ENCODE measurements at regions of chr11 and their contacts with region 1.

Region 1: DNA sequence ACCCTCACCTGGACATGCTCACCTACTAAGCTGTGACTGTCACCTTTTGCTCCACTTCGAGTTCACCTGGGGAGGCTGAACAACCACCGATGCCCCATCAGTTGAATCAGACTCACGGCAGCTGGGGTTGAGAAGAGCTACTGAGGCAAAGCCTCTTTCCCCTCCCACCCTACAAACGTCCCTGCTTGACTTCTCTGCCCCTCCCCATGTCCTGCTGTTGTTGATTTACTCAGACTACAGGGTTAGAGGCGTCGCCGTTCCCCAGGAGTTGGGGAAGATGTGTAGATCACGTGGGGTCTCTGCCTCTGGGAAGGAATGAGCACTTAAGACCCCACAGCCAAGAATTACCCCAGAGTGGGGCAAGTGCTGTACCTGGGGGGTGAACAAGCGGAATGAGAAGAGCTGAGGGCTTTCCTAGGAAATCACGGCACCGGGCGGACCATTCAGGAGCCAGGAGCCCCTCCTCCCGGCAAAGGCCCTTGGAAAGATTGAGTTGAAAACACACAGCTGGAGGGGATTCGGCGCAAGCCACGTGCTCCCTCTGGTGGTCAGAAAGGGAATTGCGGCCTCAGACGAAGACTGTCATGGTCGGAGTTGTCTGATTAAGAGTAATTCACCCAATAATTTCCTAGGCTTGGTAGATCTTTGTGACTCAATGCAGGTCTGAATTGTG is 7.0 kb downstream of the FXYD2 start:
- DNase-seq: peak; percentile 81
- ATAC-seq: peak; percentile 17
- H3K4me3 Mint-ChIP-seq: peak overlapping the region; percentile 88
- H3K27ac Mint-ChIP-seq: peak overlapping the region; percentile 97
- H3K4me1 Mint-ChIP-seq: peaks cover 75% of the 10 kb centered on the region
- H3K27me3 Mint-ChIP-seq: peaks cover 3% of the 10 kb centered on the region
- CTCF ChIP-seq: peak; percentile 80

Region 2: GRCh38 chr11:117426269-117426685 is 391.2 kb before region 1 on chr11:
- CTCF ChIA-PET with region 1: interaction called, 31 read pairs
- POLR2A ChIA-PET with region 1: interaction called, 5 read pairs
- intact Hi-C with region 1: no loop called
- DNase-seq: peak; percentile 52
- ATAC-seq: peak; percentile 62
- H3K4me3 Mint-ChIP-seq: no peak overlapping the region
- H3K27ac Mint-ChIP-seq: no peak overlapping the region
- H3K4me1 Mint-ChIP-seq: peaks cover 7% of the 10 kb centered on the region
- H3K27me3 Mint-ChIP-seq: peaks cover 7% of the 10 kb centered on the region
- CTCF ChIP-seq: peak; percentile 23

Region 3: DNA sequence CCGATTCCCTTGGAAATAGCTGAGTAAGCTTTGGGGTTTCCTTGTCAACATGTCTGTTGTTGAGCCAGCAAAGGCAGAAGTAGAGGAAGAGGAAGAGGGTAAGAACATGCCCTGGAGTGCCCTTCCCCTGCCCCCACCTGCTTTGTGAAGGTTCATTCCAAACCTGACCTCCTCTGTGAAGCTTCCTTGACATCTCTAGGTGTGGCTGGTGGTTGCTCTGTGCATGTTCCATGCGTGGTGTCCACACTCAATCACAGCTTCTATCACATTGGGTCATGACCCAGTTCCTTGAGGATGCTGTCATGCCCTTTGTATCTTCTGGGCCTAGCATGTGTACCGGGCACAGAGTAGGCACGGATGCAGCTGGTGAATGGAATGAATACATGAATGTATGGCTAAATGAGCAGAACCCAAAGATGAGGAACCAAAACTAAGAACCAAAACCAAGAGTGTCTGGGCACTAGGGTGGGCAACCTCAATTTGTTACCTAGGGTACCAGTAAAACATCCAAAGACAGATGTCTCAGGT is 82.7 kb after region 1 on chr11:
- CTCF ChIA-PET with region 1: interaction called, 4 read pairs
- POLR2A ChIA-PET with region 1: interaction called, 11 read pairs
- intact Hi-C with region 1: loop called (anchors 1 kb)
- DNase-seq: peak; percentile 40
- ATAC-seq: peak; percentile 83
- H3K4me3 Mint-ChIP-seq: peak overlapping the region; percentile 9
- H3K27ac Mint-ChIP-seq: peak overlapping the region; percentile 87
- H3K4me1 Mint-ChIP-seq: peaks cover 26% of the 10 kb centered on the region
- H3K27me3 Mint-ChIP-seq: no peaks in the 10 kb centered on the region
- CTCF ChIP-seq: no peak

Region 4: DNA sequence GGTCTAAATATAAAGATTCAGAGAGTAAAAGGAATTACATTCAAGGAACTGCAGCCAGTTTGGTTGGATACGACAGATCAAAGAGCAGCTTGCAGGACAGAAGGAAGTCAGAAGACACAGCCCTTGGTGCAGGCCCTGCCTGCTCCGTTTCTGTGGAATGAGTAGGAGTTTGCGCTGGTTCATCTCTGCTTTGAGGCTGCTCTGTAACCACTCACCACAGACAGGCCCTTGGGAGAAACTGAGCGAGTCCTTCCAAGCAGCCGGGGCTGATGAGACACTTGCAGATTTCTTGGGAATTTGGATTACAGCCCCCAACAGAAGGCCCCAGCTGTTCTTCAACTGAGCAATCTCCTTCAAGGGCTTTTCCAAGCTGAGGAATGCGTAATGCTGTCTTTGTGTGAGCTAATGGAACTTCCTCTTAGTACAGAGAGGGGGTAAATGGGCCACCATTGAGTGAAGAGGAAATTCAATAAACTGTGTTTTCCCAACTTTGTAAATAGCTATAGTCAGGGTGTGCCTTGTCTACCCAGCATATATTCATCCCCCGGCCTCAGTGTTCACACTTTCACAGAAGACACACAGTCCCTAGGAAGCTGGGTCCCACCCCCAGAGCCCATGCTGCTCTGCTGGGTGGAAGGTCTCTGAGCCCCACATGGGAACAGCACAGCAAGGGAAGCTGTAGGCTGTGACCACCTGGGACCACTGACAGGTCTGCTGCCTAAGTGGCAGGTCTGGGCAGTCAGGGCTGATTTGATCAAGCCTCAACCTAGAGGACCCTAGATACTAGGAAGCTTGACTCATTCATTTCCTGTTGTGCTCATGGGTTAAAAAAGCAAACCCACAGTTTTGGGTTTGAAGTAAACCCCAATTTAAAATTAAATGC is 185.3 kb after region 1 on chr11:
- CTCF ChIA-PET with region 1: interaction called, 4 read pairs
- POLR2A ChIA-PET with region 1: interaction called, 132 read pairs
- intact Hi-C with region 1: no loop called
- DNase-seq: no peak
- ATAC-seq: peak; percentile 21
- H3K4me3 Mint-ChIP-seq: peak overlapping the region; percentile 52
- H3K27ac Mint-ChIP-seq: peak overlapping the region; percentile 98
- H3K4me1 Mint-ChIP-seq: peaks cover 93% of the 10 kb centered on the region
- H3K27me3 Mint-ChIP-seq: no peaks in the 10 kb centered on the region
- CTCF ChIP-seq: no peak

Region 5: DNA sequence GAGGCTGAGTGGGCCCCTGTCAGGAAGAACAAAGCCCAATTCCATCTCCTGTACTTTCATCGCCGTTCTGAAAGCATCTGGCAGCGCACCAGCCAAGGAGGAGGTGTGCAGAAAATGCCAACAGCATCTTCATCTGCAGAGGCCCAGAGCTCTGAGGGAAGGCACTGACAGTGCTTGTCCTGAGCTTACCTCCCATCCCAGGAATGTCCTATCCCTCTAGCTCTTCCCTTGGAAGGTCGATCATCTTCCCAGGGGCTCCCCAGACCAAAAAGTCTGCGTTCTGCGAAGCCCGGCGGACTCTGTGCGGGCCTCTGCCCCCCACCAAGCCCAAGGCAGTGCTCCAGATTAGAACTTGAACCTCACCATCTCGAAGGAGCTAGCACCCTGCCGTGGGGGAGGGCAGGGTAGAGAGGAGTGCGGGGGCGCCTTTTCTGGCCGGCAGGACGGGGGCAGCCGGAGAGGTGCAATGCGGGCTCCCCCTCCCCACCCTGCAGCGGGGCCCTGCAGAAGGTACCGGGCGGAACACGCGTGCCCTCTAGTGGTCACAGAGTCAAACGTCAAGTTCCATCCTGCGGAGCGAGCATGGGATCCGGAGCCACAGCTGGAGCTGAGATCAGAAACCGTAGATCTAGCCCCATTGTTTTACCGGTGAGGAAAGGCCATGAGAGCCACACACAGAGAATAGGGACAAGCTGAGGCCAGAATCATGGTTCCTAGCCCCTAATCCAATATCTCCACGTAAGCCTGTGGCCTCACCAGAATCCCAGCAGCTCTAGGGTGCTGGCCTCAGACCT is 354.0 kb after region 1 on chr11:
- CTCF ChIA-PET with region 1: interaction called, 4 read pairs
- POLR2A ChIA-PET with region 1: interaction called, 3 read pairs
- intact Hi-C with region 1: loop called (anchors 5 kb)
- DNase-seq: peak; percentile 58
- ATAC-seq: peak; percentile 86
- H3K4me3 Mint-ChIP-seq: no peak overlapping the region
- H3K27ac Mint-ChIP-seq: no peak overlapping the region
- H3K4me1 Mint-ChIP-seq: no peaks in the 10 kb centered on the region
- H3K27me3 Mint-ChIP-seq: peaks cover 34% of the 10 kb centered on the region
- CTCF ChIP-seq: peak; percentile 81